AG04450 (cell line): ENCODE measurements at regions of chr16 and their contacts with region 1.

Region 1: GRCh38 chr16:71499775-71500364 is 10.7 kb upstream of the ZNF19 start:
- DNase-seq: peak; percentile 33
- H3K4me3 ChIP-seq: no peak overlapping the region
- H3K27ac ChIP-seq: no peak overlapping the region
- H3K27me3 ChIP-seq: no peaks in the 10 kb centered on the region
- CTCF ChIP-seq: peak; percentile 77

Region 2: GRCh38 chr16:71311553-71312158 is 188.2 kb before region 1 on chr16:
- CTCF ChIA-PET with region 1: interaction called, 16 read pairs
- POLR2A ChIA-PET with region 1: no interaction called
- DNase-seq: no peak
- H3K4me3 ChIP-seq: no peak overlapping the region
- H3K27ac ChIP-seq: no peak overlapping the region
- H3K27me3 ChIP-seq: no peaks in the 10 kb centered on the region
- CTCF ChIP-seq: peak; percentile 75

Region 3: DNA sequence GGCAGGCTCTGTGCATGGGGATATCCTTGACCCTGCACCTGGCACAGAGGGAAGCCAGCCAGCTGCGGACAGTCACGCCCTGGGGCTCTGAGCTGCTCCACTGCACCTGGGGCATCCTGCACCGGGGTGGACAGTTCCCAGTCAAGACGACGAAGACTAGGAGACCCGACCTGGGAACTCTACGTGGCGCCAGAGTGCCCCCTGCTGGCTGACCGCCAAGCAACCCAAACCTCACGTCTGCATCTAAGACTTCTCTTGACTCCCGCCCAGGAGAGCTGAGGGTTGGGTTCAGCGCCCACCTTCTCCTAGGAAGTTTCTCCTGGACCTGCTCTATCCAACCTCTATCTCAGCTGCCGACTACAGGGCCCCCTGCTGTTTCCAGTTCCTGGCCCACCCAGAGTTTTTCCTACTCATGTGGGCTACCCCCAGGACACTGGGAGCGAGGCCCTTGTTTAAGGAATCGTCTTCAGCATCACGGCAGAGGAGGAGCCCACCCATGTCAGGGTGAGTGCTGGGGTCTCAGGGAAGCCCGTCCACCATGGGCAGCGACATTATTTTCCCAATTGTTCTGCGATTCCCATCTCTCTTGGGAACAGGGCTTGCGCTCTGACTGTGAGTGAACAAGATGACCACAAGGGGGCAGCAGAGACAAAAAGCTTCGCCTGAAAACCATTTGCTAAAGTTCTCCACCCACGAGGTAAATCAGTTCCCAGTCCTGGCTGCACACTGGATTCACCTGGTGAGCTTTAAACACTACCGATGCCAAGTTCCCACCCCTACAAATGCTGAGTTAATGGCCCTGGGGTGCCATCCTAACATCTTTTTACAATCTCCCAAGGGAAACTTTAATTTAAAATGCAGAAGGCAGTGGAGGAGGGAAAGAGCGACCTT is 87.4 kb before region 1 on chr16:
- CTCF ChIA-PET with region 1: interaction called, 316 read pairs
- POLR2A ChIA-PET with region 1: interaction called, 3 read pairs
- DNase-seq: peak; percentile 34
- H3K4me3 ChIP-seq: no peak overlapping the region
- H3K27ac ChIP-seq: no peak overlapping the region
- H3K27me3 ChIP-seq: peaks cover 21% of the 10 kb centered on the region
- CTCF ChIP-seq: peak; percentile 83

Region 4: GRCh38 chr16:71484006-71484893 is 15.6 kb before region 1 on chr16:
- CTCF ChIA-PET with region 1: interaction called, 18 read pairs
- POLR2A ChIA-PET with region 1: no interaction called
- DNase-seq: peak; percentile 85
- H3K4me3 ChIP-seq: peak overlapping the region; percentile 88
- H3K27ac ChIP-seq: peak overlapping the region; percentile 100
- H3K27me3 ChIP-seq: no peaks in the 10 kb centered on the region
- CTCF ChIP-seq: no peak

Region 5: GRCh38 chr16:71513302-71513701 is 13.4 kb after region 1 on chr16:
- CTCF ChIA-PET with region 1: no interaction called
- POLR2A ChIA-PET with region 1: no interaction called
- DNase-seq: no peak
- H3K4me3 ChIP-seq: no peak overlapping the region
- H3K27ac ChIP-seq: no peak overlapping the region
- H3K27me3 ChIP-seq: no peaks in the 10 kb centered on the region
- CTCF ChIP-seq: no peak

Region 6: DNA sequence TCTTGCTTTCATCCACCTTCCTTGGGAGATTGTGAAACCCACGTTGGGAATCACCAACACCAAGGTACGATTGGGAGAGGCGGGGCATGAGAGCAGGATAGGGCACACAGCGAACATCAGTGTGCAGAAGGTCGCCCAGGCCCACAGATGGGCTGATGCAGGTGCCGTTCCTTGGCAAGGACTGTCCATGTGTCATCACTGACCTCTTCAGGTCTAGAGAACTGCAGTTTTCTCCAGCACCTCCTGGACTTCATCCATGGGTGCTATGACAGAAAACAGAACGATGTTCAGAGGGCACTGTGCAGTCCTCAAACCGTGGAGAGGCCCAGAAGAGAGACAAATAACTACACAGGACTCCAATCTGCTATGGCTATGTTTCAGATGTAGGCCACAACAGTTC is 101.0 kb after region 1 on chr16:
- CTCF ChIA-PET with region 1: no interaction called
- POLR2A ChIA-PET with region 1: no interaction called
- DNase-seq: no peak
- H3K4me3 ChIP-seq: no peak overlapping the region
- H3K27ac ChIP-seq: no peak overlapping the region
- H3K27me3 ChIP-seq: peaks cover 2% of the 10 kb centered on the region
- CTCF ChIP-seq: no peak